ENCODE measurements at regions of chr9 and their contacts with region 1.

Region 1: GRCh38 chr9:112705768-112706427 is 12.0 kb downstream of the INIP start:
- DNase-seq: no peak
- ATAC-seq: no peak

Region 2: DNA sequence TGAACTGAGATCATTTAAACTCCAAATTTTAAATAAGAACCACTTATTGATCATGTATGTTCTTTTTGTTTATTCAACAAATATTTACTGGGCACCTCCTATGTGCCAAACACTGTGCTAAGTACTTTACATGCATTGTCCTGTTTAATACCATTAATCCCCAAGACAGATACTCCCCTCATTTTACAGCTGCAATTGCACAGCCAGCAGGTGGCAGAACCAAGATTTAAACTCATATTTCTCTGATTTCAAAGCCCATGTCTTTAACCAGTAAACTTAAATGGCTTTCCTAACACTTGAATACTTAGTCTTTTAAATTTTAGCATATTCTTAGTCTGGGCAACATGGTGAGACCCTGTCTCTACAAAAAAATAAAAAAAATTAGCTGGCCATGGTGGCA is 262.7 kb before region 1 on chr9:
- intact Hi-C with region 1: loop called (anchors 10 kb)
- DNase-seq: no peak
- ATAC-seq: no peak

Region 3: GRCh38 chr9:112479221-112479620 is 226.7 kb before region 1 on chr9:
- intact Hi-C with region 1: loop called (anchors 10 kb)
- DNase-seq: no peak
- ATAC-seq: no peak